WTC11 (cell line): ENCODE measurements at regions of chr2 and their contacts with region 1.

Region 1: GRCh38 chr2:121128754-121129659 is 156.0 kb downstream of the TFCP2L1 start:
- DNase-seq: peak; percentile 74
- ATAC-seq: peak; percentile 64
- H3K4me3 Mint-ChIP-seq: no peak overlapping the region
- H3K27ac Mint-ChIP-seq: no peak overlapping the region
- H3K4me1 Mint-ChIP-seq: peaks cover 23% of the 10 kb centered on the region
- H3K27me3 Mint-ChIP-seq: peaks cover 8% of the 10 kb centered on the region
- CTCF ChIP-seq: peak; percentile 35; the same call in 1 of the 2 replicates

Region 2: GRCh38 chr2:120735746-120736170 is 393.2 kb before region 1 on chr2 and contains the start of gene GLI2:
- CTCF ChIA-PET with region 1: no interaction called
- POLR2A ChIA-PET with region 1: no interaction called
- DNase-seq: peak; percentile 87
- ATAC-seq: peak; percentile 52
- H3K4me3 Mint-ChIP-seq: peak within 1 kb of the TSS; percentile 88
- H3K27ac Mint-ChIP-seq: no peak within 1 kb of the TSS
- H3K4me1 Mint-ChIP-seq: peaks cover 43% of the 10 kb centered on the region
- H3K27me3 Mint-ChIP-seq: no peaks in the 10 kb centered on the region
- CTCF ChIP-seq: peak; percentile 50; the same call in 1 of the 2 replicates
- total RNA-seq, gene GLI2: 45.9 to 60.9 TPM (median 48.6 TPM) in 3 replicates

Region 3: GRCh38 chr2:120879431-120880295 is 249.3 kb before region 1 on chr2:
- CTCF ChIA-PET with region 1: no interaction called
- POLR2A ChIA-PET with region 1: no interaction called
- DNase-seq: no peak
- ATAC-seq: peak; percentile 54
- H3K4me3 Mint-ChIP-seq: no peak overlapping the region
- H3K27ac Mint-ChIP-seq: 0 out of 2 replicates have a peak overlapping the region, but pooled peaks have one; percentile 32
- H3K4me1 Mint-ChIP-seq: peaks cover 65% of the 10 kb centered on the region
- H3K27me3 Mint-ChIP-seq: 0 out of 2 replicates have a peak, but pooled peaks cover 2% of the 10 kb centered on the region
- CTCF ChIP-seq: no peak

Region 4: GRCh38 chr2:121095257-121096080 is 33.5 kb before region 1 on chr2:
- CTCF ChIA-PET with region 1: interaction called, 112 read pairs
- POLR2A ChIA-PET with region 1: no interaction called
- DNase-seq: peak; percentile 79
- ATAC-seq: peak; percentile 88
- H3K4me3 Mint-ChIP-seq: no peak overlapping the region
- H3K27ac Mint-ChIP-seq: no peak overlapping the region
- H3K4me1 Mint-ChIP-seq: no peaks in the 10 kb centered on the region
- H3K27me3 Mint-ChIP-seq: peaks cover 13% of the 10 kb centered on the region
- CTCF ChIP-seq: peak; percentile 64

Region 5: DNA sequence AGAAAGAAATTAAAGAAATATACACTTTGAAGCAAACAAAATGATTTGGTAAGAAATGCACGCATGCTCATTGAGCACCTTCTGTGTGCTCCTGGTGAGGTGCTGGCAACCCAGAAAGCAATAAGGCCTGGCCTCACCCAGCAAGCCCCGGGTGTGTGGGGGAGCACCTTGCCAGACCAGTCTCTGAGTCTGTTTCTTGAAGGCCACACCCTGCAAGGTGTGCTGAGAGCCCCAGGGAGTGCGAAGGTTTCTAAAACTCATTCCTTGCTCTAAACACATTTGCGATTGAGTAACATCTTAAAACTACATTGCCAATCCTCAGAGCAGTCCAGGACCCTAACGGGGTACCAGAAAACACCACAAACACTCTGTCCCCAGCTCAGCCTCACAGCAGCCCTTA is 22.7 kb after region 1 on chr2:
- CTCF ChIA-PET with region 1: interaction called, 15 read pairs
- POLR2A ChIA-PET with region 1: no interaction called
- DNase-seq: no peak
- ATAC-seq: no peak
- H3K4me3 Mint-ChIP-seq: no peak overlapping the region
- H3K27ac Mint-ChIP-seq: no peak overlapping the region
- H3K4me1 Mint-ChIP-seq: no peaks in the 10 kb centered on the region
- H3K27me3 Mint-ChIP-seq: peaks cover 6% of the 10 kb centered on the region; the same call in 1 of the 2 replicates
- CTCF ChIP-seq: no peak

Region 6: DNA sequence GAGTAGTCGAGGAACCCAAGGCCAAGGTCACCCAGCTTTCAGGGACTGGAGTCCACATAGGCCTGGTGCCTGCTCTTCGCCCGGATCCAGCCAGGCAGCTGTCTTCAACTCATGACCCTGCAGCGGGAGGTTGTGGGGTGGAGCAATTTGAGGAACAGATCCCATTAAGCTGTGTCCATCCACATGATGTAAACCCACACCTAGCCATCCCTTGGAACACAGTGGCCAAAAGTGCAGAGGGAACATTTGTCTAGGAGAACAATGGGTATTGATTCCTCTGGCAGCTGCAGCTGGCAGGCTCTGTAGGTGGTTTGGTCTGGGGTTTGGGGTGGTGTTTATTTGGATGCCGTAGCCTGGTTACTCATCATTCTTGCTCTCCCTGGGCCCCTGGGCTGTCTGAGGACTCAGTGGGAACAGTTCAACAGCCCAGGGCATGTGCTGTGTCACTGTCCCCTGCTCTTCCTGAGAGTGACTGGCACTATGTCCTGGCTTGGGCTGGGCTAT is 56.6 kb after region 1 on chr2:
- CTCF ChIA-PET with region 1: interaction called, 10 read pairs
- POLR2A ChIA-PET with region 1: no interaction called
- DNase-seq: no peak
- ATAC-seq: no peak
- H3K4me3 Mint-ChIP-seq: no peak overlapping the region
- H3K27ac Mint-ChIP-seq: no peak overlapping the region
- H3K4me1 Mint-ChIP-seq: peaks cover 4% of the 10 kb centered on the region
- H3K27me3 Mint-ChIP-seq: no peaks in the 10 kb centered on the region; the same call in 1 of the 2 replicates
- CTCF ChIP-seq: no peak

Region 7: DNA sequence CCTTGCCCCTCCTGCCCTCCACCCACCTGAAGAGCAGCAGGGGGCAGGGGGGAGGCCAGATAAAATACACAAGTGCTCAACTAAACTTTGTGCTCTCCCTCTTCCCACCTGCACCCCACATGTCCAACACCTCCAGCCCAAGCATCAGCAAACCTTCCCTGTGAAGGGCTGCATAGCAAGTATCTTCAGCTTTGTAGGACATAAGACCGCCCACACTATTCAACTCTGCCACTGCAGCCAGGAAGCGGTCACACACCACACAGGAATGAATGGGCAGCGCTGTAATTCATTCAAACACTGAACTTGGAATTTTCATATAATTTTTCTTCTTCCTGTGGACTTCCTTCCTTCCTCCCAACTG is 128.5 kb after region 1 on chr2:
- CTCF ChIA-PET with region 1: no interaction called
- POLR2A ChIA-PET with region 1: no interaction called
- DNase-seq: no peak
- ATAC-seq: peak; percentile 24; the same call in 1 of the 2 replicates
- H3K4me3 Mint-ChIP-seq: no peak overlapping the region
- H3K27ac Mint-ChIP-seq: no peak overlapping the region
- H3K4me1 Mint-ChIP-seq: peaks cover 6% of the 10 kb centered on the region
- H3K27me3 Mint-ChIP-seq: no peaks in the 10 kb centered on the region
- CTCF ChIP-seq: no peak

Region 8: GRCh38 chr2:121333834-121334558 is 205.0 kb after region 1 on chr2:
- CTCF ChIA-PET with region 1: interaction called, 29 read pairs
- POLR2A ChIA-PET with region 1: no interaction called
- DNase-seq: no peak
- ATAC-seq: no peak
- H3K4me3 Mint-ChIP-seq: no peak overlapping the region
- H3K27ac Mint-ChIP-seq: no peak overlapping the region
- H3K4me1 Mint-ChIP-seq: peaks cover 22% of the 10 kb centered on the region
- H3K27me3 Mint-ChIP-seq: no peaks in the 10 kb centered on the region
- CTCF ChIP-seq: no peak